SK-N-SH (cell line): ENCODE measurements at regions of chr12 and their contacts with region 1.

Region 1: DNA sequence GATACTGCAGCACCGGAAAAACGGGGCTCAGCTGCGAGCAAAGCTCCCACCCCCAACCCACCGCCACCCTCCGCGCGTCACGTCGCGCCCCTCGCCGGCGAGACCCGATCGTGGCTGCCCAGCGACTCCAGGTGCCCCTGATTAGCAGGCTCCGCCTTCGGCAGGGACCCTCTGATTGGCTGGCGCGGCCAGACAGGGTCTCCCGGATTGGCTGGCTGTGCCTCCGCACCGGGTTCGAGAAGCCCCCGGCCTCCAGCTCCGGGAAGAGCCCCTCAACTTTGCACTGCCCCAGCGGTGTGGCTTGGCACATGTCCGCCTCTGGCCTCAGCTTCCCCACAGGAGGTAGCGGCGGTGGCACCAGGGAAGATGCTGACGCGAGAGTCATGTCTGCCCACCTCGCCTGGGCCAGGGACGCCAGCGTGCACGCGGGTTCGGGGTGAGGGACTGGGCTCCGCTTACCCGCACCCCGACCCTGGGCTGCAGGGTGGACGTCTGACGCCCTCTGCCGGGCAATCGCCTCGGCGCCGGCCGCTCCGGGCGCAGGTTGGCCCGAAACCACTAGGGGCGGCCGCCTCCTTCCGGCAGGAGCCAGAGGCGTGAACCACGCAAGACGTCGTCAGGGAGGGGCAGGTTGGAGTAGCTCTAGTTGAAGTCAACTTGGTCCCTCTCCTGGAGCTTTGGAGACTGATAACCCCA is 498 bp upstream of the RHOF start:
- DNase-seq: peak; percentile 94
- H3K4me3 ChIP-seq: peak overlapping the region; percentile 54 to 61
- H3K27ac ChIP-seq: peak overlapping the region; percentile 82 to 99
- H3K4me1 ChIP-seq: peaks cover 36 to 62% of the 10 kb centered on the region in 2 experiments
- H3K27me3 ChIP-seq: no peaks in the 10 kb centered on the region
- CTCF ChIP-seq: peak; percentile 97
- EP300 ChIP-seq: peak in 1 of 2 experiments; percentile 9; a peak in 1 of 4 replicates
- RAD21 ChIP-seq: peak; percentile 83

Region 2: GRCh38 chr12:120713861-120714482 is 1080.0 kb before region 1 on chr12:
- CTCF ChIA-PET with region 1: no interaction called
- POLR2A ChIA-PET with region 1: no interaction called
- DNase-seq: peak; percentile 77
- H3K4me3 ChIP-seq: no peak overlapping the region; a peak in 1 of 4 replicates
- H3K27ac ChIP-seq: no peak overlapping the region
- H3K4me1 ChIP-seq: peaks cover 0 to 24% of the 10 kb centered on the region in 2 experiments; a peak in 2 of 4 replicates
- H3K27me3 ChIP-seq: no peaks in the 10 kb centered on the region
- CTCF ChIP-seq: peak; percentile 90
- EP300 ChIP-seq: no peak
- RAD21 ChIP-seq: peak; percentile 86

Region 3: GRCh38 chr12:121287267-121287954 is 506.6 kb before region 1 on chr12:
- CTCF ChIA-PET with region 1: no interaction called
- POLR2A ChIA-PET with region 1: no interaction called
- DNase-seq: no peak
- H3K4me3 ChIP-seq: no peak overlapping the region
- H3K27ac ChIP-seq: no peak overlapping the region
- H3K4me1 ChIP-seq: no peaks in the 10 kb centered on the region
- H3K27me3 ChIP-seq: no peaks in the 10 kb centered on the region
- CTCF ChIP-seq: no peak
- EP300 ChIP-seq: no peak
- RAD21 ChIP-seq: no peak

Region 4: GRCh38 chr12:121476477-121476876 is 317.5 kb before region 1 on chr12:
- CTCF ChIA-PET with region 1: no interaction called
- POLR2A ChIA-PET with region 1: no interaction called
- DNase-seq: no peak
- H3K4me3 ChIP-seq: no peak overlapping the region
- H3K27ac ChIP-seq: no peak overlapping the region
- H3K4me1 ChIP-seq: peaks cover 0 to under 1% of the 10 kb centered on the region in 2 experiments; a peak in 1 of 4 replicates
- H3K27me3 ChIP-seq: no peaks in the 10 kb centered on the region
- CTCF ChIP-seq: no peak
- EP300 ChIP-seq: no peak
- RAD21 ChIP-seq: no peak

Region 5: DNA sequence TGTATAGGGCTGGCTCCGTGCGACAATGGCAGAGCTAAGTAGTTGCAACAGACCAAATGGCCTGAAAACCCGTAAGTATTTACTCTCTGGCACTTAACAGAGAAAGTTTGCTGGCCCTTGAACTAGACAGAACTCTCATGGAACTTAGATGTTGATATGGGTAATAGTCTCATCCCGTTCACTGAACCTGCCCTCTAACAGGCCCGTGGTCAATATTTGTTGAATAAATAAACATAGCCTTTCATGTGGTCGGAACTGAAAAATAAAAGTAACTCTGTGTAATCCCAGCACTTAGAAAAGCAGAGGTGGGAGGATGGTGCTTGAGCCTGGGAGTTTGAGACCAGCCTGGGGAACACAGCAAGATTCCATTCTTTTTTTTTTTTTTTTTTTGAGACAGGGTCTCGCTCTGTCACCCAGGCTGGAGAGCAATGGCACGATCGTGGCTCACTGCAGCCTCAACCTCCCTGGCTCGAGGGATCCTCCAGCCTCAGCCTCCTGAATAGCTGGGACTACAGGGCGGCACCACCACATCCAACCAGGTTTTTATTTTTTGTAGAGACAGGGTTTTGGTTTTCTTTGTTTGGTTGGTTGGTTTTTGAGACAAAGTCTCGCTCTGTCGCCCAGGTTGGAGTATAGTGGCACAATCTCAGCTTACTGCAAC is 242.9 kb before region 1 on chr12:
- CTCF ChIA-PET with region 1: interaction called, 14 read pairs
- POLR2A ChIA-PET with region 1: no interaction called
- DNase-seq: no peak
- H3K4me3 ChIP-seq: no peak overlapping the region
- H3K27ac ChIP-seq: no peak overlapping the region
- H3K4me1 ChIP-seq: no peaks in the 10 kb centered on the region
- H3K27me3 ChIP-seq: no peaks in the 10 kb centered on the region
- CTCF ChIP-seq: no peak
- EP300 ChIP-seq: no peak
- RAD21 ChIP-seq: no peak

Region 6: DNA sequence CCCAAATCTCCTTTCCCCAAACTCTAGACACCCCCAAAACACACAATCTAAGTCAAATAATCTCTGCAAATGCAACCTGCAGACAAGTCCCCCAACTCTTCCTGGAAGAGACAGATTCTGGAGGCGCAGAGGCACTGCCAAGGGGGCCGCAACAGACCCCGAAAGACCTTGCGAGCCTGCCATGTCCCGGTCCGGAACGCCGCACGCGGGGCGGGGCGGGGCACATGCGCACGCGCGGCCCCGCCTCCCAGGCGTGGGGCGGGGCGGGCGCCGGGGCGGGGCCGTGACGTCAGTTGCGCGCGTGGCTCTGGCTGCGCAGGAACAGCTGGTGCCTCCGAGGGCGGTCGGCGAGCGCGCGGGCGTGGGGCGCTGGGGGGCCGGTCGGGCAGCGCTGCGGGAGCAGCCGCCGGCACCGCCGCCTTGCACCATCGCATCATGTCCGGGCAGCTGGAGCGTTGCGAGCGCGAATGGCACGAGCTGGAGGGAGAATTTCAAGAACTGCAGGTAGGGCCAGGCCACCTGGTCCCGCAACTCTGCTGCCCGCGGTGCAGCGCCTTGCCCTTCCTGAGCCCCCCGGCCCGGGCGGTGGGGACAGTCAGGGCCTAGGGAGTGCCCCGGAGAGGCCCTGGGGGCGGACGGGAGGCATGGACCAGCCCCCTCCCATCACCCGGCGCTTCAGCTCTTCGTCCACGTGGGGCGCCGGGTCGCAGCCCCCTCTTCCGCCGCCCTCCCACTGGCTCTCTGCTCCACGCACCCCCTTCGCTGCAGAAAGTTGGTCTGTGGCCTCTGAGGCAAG is 81.3 kb before region 1 on chr12 and contains the start of gene TMEM120B:
- CTCF ChIA-PET with region 1: interaction called, 46 read pairs
- POLR2A ChIA-PET with region 1: interaction called, 9 read pairs
- DNase-seq: peak; percentile 98
- H3K4me3 ChIP-seq: peak within 1 kb of the TSS; percentile 76 to 97
- H3K27ac ChIP-seq: peak within 1 kb of the TSS; percentile 64 to 72; a peak in 3 of 4 replicates
- H3K4me1 ChIP-seq: peaks cover 6 to 8% of the 10 kb centered on the region in 2 experiments; a peak in 2 of 4 replicates
- H3K27me3 ChIP-seq: no peaks in the 10 kb centered on the region
- CTCF ChIP-seq: peak; percentile 24; the same call in 1 of the 2 replicates
- EP300 ChIP-seq: no peak
- RAD21 ChIP-seq: no peak
- polyA plus RNA-seq, gene TMEM120B: 15.1 and 15.4 TPM in 2 replicates

Region 7: GRCh38 chr12:121811434-121812319 is 17.7 kb after region 1 on chr12:
- CTCF ChIA-PET with region 1: interaction called, 675 read pairs
- POLR2A ChIA-PET with region 1: interaction called, 79 read pairs
- DNase-seq: peak; percentile 96
- H3K4me3 ChIP-seq: peak overlapping the region; percentile 62 to 93
- H3K27ac ChIP-seq: peak overlapping the region; percentile 56 to 74; a peak in 3 of 4 replicates
- H3K4me1 ChIP-seq: peaks cover 22 to 24% of the 10 kb centered on the region in 2 experiments; a peak in 2 of 4 replicates
- H3K27me3 ChIP-seq: no peaks in the 10 kb centered on the region
- CTCF ChIP-seq: peak; percentile 91
- EP300 ChIP-seq: no peak
- RAD21 ChIP-seq: peak; percentile 79

Region 8: GRCh38 chr12:121861636-121862254 is 67.8 kb after region 1 on chr12:
- CTCF ChIA-PET with region 1: interaction called, 17 read pairs
- POLR2A ChIA-PET with region 1: no interaction called
- DNase-seq: peak; percentile 60
- H3K4me3 ChIP-seq: no peak overlapping the region
- H3K27ac ChIP-seq: peak overlapping the region; percentile 20 to 59; a peak in 3 of 4 replicates
- H3K4me1 ChIP-seq: peaks cover 7 to 15% of the 10 kb centered on the region in 2 experiments; a peak in 3 of 4 replicates
- H3K27me3 ChIP-seq: no peaks in the 10 kb centered on the region
- CTCF ChIP-seq: no peak
- EP300 ChIP-seq: no peak
- RAD21 ChIP-seq: no peak

Region 9: GRCh38 chr12:121888478-121889266 is 94.7 kb after region 1 on chr12 and contains the start of gene PSMD9:
- CTCF ChIA-PET with region 1: interaction called, 186 read pairs
- POLR2A ChIA-PET with region 1: interaction called, 34 read pairs
- DNase-seq: peak; percentile 97
- H3K4me3 ChIP-seq: peak within 1 kb of the TSS; percentile 68 to 86
- H3K27ac ChIP-seq: peak within 1 kb of the TSS; percentile 85 to 94
- H3K4me1 ChIP-seq: peaks cover 8 to 9% of the 10 kb centered on the region in 2 experiments; a peak in 3 of 4 replicates
- H3K27me3 ChIP-seq: no peaks in the 10 kb centered on the region
- CTCF ChIP-seq: peak; percentile 68
- EP300 ChIP-seq: no peak
- RAD21 ChIP-seq: peak; percentile 73
- polyA plus RNA-seq, gene PSMD9: 227 and 234 TPM in 2 replicates